ENCODE measurements at regions of chr1 and their contacts with region 1.

Region 1: GRCh38 chr1:66996018-66996682 is 57.8 kb downstream of the SLC35D1 start:
- DNase-seq: peak; percentile 45
- ATAC-seq: peak; percentile 81
- H3K4me3 ChIP-seq: no peak overlapping the region
- H3K27ac ChIP-seq: no peak overlapping the region
- H3K4me1 ChIP-seq: no peaks in the 10 kb centered on the region
- H3K27me3 ChIP-seq: no peaks in the 10 kb centered on the region
- CTCF ChIP-seq: peak; percentile 82 to 96 (median 88)
- POLR2A ChIP-seq: no peak
- RAD21 ChIP-seq: peak; percentile 95

Region 2: DNA sequence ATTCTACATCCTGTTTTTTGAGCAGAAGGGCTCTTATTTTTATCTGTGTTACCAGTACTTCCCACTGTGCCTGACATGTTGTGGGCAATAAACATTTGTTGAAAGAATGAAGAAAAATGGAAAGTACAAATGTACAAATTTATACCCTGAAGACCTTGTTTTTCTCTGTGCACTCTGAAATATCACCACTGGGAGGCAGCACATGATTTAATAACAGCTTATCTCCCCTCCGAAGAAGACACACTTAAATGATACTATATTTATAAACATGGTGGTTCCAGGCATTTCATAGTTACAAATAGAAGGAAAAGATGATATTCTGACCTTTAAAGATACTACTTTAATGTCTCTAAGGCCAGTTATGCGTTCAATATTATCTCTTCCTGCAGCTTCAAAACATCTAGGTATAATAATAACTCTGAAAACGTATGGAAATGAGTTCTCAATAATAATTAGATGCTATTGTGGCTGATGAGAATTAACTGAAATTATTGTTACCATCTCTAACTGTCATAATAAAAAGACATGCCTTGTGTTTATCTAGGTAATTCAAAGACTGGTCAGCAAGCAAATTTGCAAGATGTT is 231.1 kb before region 1 on chr1:
- CTCF ChIA-PET with region 1: interaction called, 4 read pairs
- POLR2A ChIA-PET with region 1: no interaction called
- RAD21 ChIA-PET with region 1: no interaction called
- intact Hi-C with region 1: loop called (anchors 2 kb)
- DNase-seq: peak; percentile 31
- ATAC-seq: peak; percentile 82
- H3K4me3 ChIP-seq: no peak overlapping the region
- H3K27ac ChIP-seq: no peak overlapping the region
- H3K4me1 ChIP-seq: 0 out of 4 replicates have a peak, but pooled peaks cover 0 to 2% of the 10 kb centered on the region in 2 experiments
- H3K27me3 ChIP-seq: no peaks in the 10 kb centered on the region
- CTCF ChIP-seq: peak; percentile 62 to 86 (median 86)
- POLR2A ChIP-seq: no peak
- RAD21 ChIP-seq: peak; percentile 91

Region 3: GRCh38 chr1:67227196-67227595 is 231.0 kb after region 1 on chr1:
- CTCF ChIA-PET with region 1: no interaction called
- POLR2A ChIA-PET with region 1: no interaction called
- RAD21 ChIA-PET with region 1: no interaction called
- intact Hi-C with region 1: no loop called
- DNase-seq: no peak
- ATAC-seq: no peak
- H3K4me3 ChIP-seq: no peak overlapping the region
- H3K27ac ChIP-seq: no peak overlapping the region
- H3K4me1 ChIP-seq: no peaks in the 10 kb centered on the region
- H3K27me3 ChIP-seq: no peaks in the 10 kb centered on the region
- CTCF ChIP-seq: no peak
- POLR2A ChIP-seq: no peak
- RAD21 ChIP-seq: no peak